HEK293 (cell line): ENCODE measurements at regions of chr6 and their contacts with region 1.

Region 1: DNA sequence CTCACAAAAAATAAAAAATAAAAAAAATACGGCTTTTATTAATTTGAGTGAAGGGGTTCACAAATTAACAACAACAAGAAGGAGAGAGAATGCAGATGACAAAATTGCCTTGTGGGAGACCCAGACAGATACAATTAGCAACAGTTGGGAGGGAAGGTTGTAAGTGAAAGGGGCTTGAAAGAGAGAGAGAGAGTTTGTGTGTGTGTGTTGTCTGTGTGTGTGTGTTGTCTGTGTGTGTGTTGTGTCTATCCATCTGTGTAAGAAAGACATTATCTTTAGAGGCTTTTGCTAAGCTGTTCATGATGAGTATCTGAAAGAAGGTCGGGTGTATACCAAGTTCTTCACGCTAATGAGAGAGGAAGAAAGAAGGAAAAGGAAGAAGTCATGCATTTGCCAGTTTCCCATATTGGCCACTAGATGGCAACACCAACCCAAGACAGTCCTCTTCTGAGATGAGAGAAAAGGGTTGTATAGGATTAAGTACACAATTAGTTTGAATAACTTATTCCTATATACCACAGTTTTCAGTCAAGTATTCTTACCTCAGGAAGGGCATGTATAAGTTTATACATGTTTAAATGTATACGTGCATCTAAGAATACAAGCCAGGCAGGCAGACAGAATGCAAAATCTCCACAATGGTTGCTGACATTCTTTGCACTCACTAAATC is 63.7 kb upstream of the CD2AP start:
- H3K4me3 ChIP-seq: peak overlapping the region; percentile 35
- H3K27ac ChIP-seq: peak overlapping the region; percentile 83
- H3K4me1 ChIP-seq: peaks cover 6% of the 10 kb centered on the region; the same call in 1 of the 2 replicates
- CTCF ChIP-seq: peak; percentile 72

Region 2: DNA sequence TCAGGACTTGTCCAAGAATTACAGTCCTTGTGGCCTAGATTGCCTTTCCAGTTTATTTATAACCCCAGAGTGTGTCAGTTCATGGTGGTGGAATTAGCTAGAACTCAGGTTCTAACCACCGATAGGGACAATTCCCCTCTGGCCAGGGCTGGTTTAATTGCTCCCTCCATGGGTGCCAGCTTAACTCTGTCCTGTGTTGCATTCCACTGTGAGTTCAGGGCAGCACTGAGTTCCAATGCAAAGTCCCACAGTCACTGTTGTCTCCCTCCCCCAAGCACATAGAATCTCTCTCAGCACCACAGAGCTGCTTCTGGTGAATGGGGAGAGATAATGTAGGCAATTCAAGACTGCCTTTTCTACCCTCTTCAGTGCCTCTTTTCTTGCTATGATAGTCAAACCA is 21.6 kb before region 1 on chr6:
- CTCF ChIA-PET with region 1: interaction called, 10 read pairs
- POLR2A ChIA-PET with region 1: no interaction called
- H3K4me3 ChIP-seq: no peak overlapping the region
- H3K27ac ChIP-seq: no peak overlapping the region
- H3K4me1 ChIP-seq: no peaks in the 10 kb centered on the region
- CTCF ChIP-seq: no peak

Region 3: GRCh38 chr6:47477497-47478232 is 63.8 kb after region 1 on chr6 and contains the start of gene CD2AP:
- CTCF ChIA-PET with region 1: interaction called, 22 read pairs
- POLR2A ChIA-PET with region 1: interaction called, 47 read pairs
- H3K4me3 ChIP-seq: peak within 1 kb of the TSS; percentile 86
- H3K27ac ChIP-seq: peak within 1 kb of the TSS; percentile 99
- H3K4me1 ChIP-seq: peaks cover 9% of the 10 kb centered on the region
- CTCF ChIP-seq: peak; percentile 67

Region 4: DNA sequence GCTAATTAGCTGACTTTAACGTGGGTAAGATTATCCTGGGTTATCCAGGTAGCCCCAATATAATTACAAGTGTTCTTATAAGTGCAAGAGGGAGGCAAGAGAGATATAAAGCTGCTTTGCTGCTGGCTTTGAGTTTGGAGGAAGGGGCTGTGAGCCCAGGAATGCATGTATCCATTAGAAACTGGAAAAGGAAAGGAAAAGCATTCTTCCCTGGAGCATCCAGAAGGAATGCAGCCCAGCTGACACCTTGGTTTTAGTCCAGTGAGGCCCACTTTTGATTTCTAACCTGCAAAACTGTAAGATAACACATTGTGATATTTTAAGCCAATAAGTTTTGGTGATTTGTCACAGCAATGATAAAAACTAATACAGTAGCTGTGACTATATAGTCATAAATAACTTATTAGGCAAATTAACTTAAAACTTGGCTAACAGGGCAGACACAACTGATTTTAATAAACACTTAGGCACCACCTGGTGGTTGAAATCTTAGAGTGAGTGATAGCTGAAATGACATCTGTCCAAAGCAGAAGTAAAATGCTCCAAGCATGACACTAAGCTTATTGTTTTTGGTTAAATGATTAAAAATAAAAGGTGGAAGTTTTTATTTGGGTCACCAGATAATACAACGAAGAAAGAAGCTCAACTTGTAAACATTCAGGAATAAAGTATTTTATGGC is 320.1 kb after region 1 on chr6:
- CTCF ChIA-PET with region 1: interaction called, 23 read pairs
- POLR2A ChIA-PET with region 1: no interaction called
- H3K4me3 ChIP-seq: no peak overlapping the region
- H3K27ac ChIP-seq: no peak overlapping the region
- H3K4me1 ChIP-seq: no peaks in the 10 kb centered on the region
- CTCF ChIP-seq: no peak

Region 5: GRCh38 chr6:47780510-47781356 is 366.8 kb after region 1 on chr6:
- CTCF ChIA-PET with region 1: interaction called, 20 read pairs
- POLR2A ChIA-PET with region 1: no interaction called
- H3K4me3 ChIP-seq: peak overlapping the region; percentile 23; the same call in 1 of the 2 replicates
- H3K27ac ChIP-seq: no peak overlapping the region
- H3K4me1 ChIP-seq: no peaks in the 10 kb centered on the region
- CTCF ChIP-seq: peak; percentile 78